Mucosa of descending colon (tissue), 3 donors: ENCODE measurements at regions of chr7 and their contacts with region 1.

Region 1: DNA sequence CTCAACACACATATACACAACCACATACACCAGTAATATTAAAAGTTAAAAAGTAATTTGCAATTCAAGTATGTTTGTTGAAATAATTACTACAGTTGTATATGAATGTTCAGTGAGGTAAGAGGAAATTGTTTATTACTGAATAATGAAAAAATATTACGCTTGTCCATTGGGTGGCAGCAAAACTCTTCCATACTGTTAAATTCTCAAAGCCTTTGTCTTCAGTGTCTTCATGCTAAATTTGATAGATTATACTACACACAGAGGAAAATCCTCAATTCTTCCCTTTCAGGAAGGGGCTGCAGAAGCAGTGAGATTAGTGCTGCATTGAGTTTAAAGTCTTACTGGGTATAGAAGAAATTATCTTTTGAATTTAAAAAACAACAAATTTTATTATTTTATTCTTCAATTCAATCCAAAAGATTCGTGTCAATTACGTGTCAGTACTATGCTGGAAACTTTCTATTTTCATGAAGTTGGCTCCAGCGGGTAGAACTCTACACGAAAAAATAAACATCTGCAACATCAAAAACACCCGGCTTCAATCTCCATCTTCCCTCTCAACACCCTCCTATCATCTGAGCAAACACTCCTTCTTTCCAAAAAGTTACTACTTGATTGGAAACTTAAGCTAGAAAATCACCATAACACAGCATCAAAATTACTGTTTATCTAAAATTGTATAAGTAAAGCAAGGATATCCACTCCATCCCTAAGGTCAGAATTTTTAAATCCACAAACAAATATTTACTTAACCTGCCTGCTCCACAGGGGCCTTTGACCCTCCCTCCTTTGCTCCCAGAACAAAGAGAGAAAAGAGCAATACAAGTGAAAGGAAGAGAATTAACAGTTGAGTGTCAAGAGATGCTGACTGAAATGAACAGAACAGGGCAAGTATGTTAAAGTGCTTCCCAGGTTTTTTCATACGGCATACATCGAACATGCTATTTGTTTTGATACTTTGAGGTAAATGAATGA is 37.0 kb upstream of the TES start:
- DNase-seq: peak in 1 of 3 donors; percentile 57
- ATAC-seq: peak; percentile 62
- H3K4me3 ChIP-seq: no peak overlapping the region
- H3K4me1 ChIP-seq: peaks cover 8% of the 10 kb centered on the region
- CTCF ChIP-seq: no peak

Region 2: DNA sequence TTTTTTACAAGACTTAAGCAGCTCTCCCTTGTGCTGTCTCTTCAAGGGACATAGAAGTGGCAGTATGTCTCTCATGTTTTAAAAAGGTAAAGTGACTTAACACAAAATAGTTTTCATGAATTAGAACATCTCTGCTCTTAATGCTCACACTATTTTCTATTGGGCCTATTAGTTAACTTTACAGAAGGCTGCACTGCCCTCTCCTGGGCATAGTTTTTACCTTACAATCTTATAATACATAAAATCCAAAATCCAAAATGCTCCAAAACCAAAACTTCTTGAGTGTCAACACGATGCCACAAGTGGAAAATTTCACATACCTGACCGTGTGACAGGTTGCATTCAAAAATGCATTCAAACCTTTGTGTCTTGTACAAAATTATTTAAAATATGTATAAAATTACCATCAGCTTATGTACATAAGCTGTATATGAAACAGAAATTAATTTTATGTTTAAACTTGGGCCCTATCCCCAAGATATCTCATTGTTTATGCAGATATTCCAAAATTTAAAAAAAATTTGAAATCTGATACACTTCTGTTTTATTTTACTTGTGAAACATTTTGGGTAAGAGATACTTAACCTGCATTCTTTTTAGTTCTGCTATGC is 62.8 kb after region 1 on chr7:
- intact Hi-C with region 1: loop called in 1 of 2 experiments (anchors 10 kb)
- DNase-seq: peak in 1 of 3 donors; percentile 87
- ATAC-seq: peak; percentile 42
- H3K4me3 ChIP-seq: no peak overlapping the region
- H3K4me1 ChIP-seq: peaks cover 23% of the 10 kb centered on the region
- CTCF ChIP-seq: no peak

Region 3: DNA sequence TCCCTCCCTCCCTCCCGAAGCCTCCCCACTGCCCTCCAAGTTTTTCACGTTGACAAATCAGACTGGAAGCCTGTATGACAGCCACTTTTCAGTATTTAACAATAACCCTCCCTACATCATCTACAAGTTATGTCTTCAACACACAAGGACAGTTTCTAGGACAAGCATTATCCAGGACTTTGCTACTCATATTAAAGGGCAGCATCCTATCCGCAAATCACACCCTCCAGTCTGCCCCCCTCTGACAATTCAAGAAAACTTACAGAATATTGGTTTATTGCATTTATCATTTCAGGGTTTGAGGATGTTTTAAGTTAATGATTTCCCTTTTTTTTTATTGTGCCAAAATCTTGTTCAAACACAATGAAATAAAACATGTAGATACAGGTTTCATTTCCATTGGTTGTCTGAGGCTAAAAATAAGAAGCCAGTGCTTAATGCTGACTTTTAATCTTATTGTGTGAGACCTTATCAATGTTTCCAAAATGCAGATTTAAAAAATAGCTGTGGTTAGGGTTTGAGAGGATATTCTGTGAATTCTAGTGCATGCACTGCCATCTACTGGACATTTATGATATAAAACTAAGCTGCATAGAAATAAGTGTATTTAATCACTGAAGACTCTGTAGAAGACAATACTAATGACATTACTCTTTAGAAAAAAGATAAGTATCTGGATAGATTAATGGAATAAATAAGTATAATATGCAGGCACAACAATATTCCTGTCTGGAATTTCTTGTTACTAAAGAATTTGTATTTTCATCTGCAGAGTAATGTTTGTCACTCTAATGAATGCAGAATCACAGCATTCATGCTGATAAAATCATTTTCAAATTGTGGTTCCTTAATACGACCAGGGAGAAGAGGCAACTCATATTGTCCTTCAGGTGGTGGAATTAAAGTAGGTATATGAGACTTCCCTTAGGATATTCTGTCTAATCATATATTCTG is 415.6 kb after region 1 on chr7:
- intact Hi-C with region 1: loop called (anchors 10 kb)
- DNase-seq: peak in 1 of 3 donors; percentile 22
- ATAC-seq: peak; percentile 27
- H3K4me3 ChIP-seq: no peak overlapping the region
- H3K4me1 ChIP-seq: peaks cover 12% of the 10 kb centered on the region
- CTCF ChIP-seq: peak; percentile 29